ENCODE measurements at regions of chr11 and their contacts with region 1.

Region 1: DNA sequence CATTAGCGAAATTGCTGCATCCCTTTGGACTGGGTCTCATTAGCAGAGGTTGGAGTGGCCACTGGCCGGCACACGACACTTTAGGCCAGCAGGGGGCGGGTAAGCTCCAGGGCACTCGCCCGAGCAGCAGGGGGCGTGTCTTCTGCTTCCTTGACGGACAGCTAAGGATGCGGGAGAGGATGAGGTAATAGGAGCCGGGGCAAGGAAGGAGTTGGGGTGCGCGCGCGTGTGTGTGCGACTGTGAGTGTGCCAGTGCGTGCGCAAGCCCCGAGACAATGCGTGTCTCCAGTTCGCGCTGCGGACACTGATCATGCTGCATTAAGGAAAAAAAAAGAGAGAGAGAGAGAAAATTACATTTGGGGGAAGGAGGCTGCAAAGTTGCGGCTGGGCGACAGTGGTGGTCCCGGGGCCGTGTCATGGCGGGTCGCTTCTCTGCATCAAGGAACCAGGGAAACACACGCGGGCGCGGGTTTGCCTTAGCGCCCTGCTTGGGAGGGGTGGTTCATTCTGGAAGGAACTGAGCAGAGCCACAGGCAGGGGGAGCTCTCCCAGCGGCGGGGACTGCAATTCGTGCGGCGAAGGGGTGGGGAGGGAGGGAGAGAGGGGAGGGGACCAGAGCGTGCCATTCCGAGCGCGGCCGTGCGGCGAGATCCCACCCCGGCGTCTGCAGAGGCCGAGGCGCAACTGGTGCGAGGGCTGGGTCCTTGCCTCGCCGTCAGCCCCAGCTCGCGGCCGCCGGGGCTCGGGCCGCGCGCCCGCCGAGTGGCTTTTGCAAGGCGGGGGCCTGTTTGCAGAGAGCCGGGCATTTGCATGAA is at the start of gene DTX4:
- DNase-seq: peak; percentile 57
- ATAC-seq: peak; percentile 76
- H3K4me3 ChIP-seq: peak within 1 kb of the TSS; percentile 93
- H3K27ac ChIP-seq: peak within 1 kb of the TSS; percentile 84
- H3K4me1 ChIP-seq: peaks cover 6% of the 10 kb centered on the region
- H3K27me3 ChIP-seq: no peaks in the 10 kb centered on the region
- CTCF ChIP-seq: peak; percentile 97 to 98 (median 97)
- EP300 ChIP-seq: no peak
- POLR2A ChIP-seq: 0 out of 2 replicates have a peak, but pooled peaks have one; percentile 69
- RAD21 ChIP-seq: peak; percentile 92
- polyA plus RNA-seq, gene DTX4: 5.9 to 6.9 TPM

Region 2: DNA sequence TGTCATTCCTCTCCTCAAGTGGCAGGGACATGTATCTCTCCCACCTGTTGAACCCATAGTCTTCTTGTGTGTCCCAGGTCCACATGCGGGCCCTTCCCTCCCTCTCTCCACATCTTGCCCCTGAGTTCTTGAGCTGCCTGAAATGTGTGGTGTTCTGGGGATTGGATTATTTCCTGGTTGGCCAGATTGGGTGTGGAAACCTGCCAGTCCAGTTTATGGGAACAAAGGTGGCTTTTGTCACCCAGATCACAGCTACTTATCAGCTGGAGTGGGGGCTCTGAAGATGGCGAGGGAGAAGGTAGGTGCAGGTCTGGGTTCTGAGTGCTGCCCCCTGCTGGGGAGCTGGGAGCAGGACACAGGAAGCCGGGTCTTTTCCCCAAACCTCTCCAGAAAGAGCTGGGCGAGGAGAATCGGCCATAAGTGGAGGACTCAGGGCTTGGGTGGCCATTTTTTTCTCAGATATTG is 14.4 kb after region 1 on chr11:
- CTCF ChIA-PET with region 1: interaction called, 1,180 read pairs
- POLR2A ChIA-PET with region 1: interaction called, 32 read pairs
- RAD21 ChIA-PET with region 1: interaction called, 78 read pairs
- SMC1A ChIA-PET with region 1: interaction called, 123 read pairs
- in situ Hi-C with region 1: no loop called
- intact Hi-C with region 1: loop called (anchors 1 kb)
- DNase-seq: no peak
- ATAC-seq: peak; percentile 88
- H3K4me3 ChIP-seq: no peak overlapping the region
- H3K27ac ChIP-seq: no peak overlapping the region
- H3K4me1 ChIP-seq: peaks cover 10% of the 10 kb centered on the region
- H3K27me3 ChIP-seq: no peaks in the 10 kb centered on the region
- CTCF ChIP-seq: peak; percentile 67 to 92 (median 89)
- EP300 ChIP-seq: no peak
- POLR2A ChIP-seq: no peak
- RAD21 ChIP-seq: peak; percentile 46

Region 3: GRCh38 chr11:59216641-59217564 is 45.2 kb after region 1 on chr11:
- CTCF ChIA-PET with region 1: interaction called, 1,180 read pairs
- POLR2A ChIA-PET with region 1: interaction called, 7 read pairs
- RAD21 ChIA-PET with region 1: interaction called, 15 read pairs
- SMC1A ChIA-PET with region 1: interaction called, 17 read pairs
- in situ Hi-C with region 1: no loop called
- intact Hi-C with region 1: no loop called
- DNase-seq: peak; percentile 99
- ATAC-seq: peak; percentile 88
- H3K4me3 ChIP-seq: no peak overlapping the region
- H3K27ac ChIP-seq: peak overlapping the region; percentile 91
- H3K4me1 ChIP-seq: peaks cover 76% of the 10 kb centered on the region
- H3K27me3 ChIP-seq: no peaks in the 10 kb centered on the region
- CTCF ChIP-seq: no peak
- EP300 ChIP-seq: peak; percentile 99 to 100
- POLR2A ChIP-seq: no peak
- RAD21 ChIP-seq: peak; percentile 40

Region 4: GRCh38 chr11:59273373-59273841 is 101.7 kb after region 1 on chr11:
- CTCF ChIA-PET with region 1: interaction called, 11 read pairs
- POLR2A ChIA-PET with region 1: interaction called, 3 read pairs
- RAD21 ChIA-PET with region 1: interaction called, 9 read pairs
- SMC1A ChIA-PET with region 1: interaction called, 7 read pairs
- in situ Hi-C with region 1: no loop called
- intact Hi-C with region 1: no loop called
- DNase-seq: peak; percentile 79
- ATAC-seq: peak; percentile 93
- H3K4me3 ChIP-seq: no peak overlapping the region
- H3K27ac ChIP-seq: peak overlapping the region; percentile 77
- H3K4me1 ChIP-seq: peaks cover 35% of the 10 kb centered on the region
- H3K27me3 ChIP-seq: no peaks in the 10 kb centered on the region
- CTCF ChIP-seq: no peak
- EP300 ChIP-seq: peak; percentile 88 to 96
- POLR2A ChIP-seq: no peak
- RAD21 ChIP-seq: no peak

Region 5: DNA sequence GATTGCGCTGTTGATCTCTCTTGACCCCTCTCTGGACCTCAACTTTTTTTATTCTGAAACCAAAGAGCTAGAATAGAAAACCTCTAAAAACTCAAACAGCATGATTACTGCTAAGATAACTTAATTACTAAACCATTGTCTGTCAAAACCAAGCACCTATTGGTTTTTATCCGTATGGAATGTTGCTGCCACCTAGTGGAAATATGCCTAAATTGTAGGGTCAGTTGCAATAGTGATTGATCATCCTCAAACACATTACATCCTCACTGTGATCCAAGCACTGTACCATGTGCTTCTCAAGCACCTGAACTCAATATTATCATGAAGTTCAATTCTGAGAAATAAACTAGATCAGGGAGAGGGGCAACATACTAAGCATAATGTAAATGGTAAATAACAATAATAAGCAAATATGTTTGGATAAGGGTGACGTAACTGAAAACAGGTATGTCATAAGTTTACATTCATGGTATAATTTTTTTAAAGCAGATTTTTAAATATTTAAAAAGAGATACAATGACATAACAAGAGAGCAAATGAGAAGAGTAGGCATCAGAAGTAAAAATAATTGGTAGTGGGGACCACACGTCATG is 258.3 kb after region 1 on chr11:
- CTCF ChIA-PET with region 1: interaction called, 85 read pairs
- POLR2A ChIA-PET with region 1: no interaction called
- RAD21 ChIA-PET with region 1: interaction called, 25 read pairs
- SMC1A ChIA-PET with region 1: interaction called, 38 read pairs
- in situ Hi-C with region 1: loop called (anchors 5 kb)
- intact Hi-C with region 1: loop called (anchors 1 kb)
- DNase-seq: peak; percentile 61
- ATAC-seq: peak; percentile 94
- H3K4me3 ChIP-seq: no peak overlapping the region
- H3K27ac ChIP-seq: no peak overlapping the region
- H3K4me1 ChIP-seq: no peaks in the 10 kb centered on the region
- H3K27me3 ChIP-seq: peaks cover 0 to 4% of the 10 kb centered on the region in 2 experiments; a peak in 1 of 4 replicates
- CTCF ChIP-seq: peak; percentile 70 to 82 (median 78)
- EP300 ChIP-seq: no peak
- POLR2A ChIP-seq: no peak
- RAD21 ChIP-seq: peak; percentile 92

Measured in GM12878 (cell line).